Activated naive CD4-positive, alpha-beta T cell treated with anti-CD3 and anti-CD28 coated beads, Interleukin-2, amount 10 ng/mL, durations not matched to agents 7 days and 5 days (primary cell): ENCODE measurements at regions of chr17 and their contacts with region 1.

Region 1: DNA sequence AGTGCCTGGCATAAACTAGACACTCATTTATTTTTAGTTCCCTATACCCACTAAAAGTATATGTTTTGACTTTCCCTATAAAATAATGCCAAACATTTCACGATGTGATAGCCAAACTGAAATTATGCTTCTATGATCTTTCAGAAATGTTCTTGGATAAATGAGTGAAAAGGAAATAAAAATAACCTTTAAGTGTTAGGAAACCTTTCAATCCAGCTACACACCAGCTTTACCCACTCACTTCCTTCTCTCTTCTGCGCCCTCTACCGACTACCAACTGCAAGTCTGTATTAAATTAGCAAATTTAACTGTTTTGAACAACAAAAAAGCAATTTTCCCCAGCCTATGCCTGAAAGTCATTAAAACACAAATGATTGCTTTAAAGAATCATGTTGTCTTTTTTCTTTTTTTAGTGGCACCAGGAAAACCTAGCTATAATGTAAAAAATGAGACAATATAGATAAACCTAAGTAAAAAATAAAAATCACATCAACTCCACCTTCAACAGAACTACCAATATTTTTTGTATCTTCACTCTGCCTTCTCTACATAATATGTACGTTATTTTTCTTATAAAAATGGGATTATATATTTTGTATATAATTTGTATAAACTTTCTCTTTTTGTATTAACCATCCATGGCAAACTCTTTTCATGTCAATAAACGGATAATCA is 13.2 kb upstream of the TMEM100 start:
- DNase-seq: peak; percentile 56
- H3K4me3 Mint-ChIP-seq: no peak overlapping the region
- H3K27ac Mint-ChIP-seq: no peak overlapping the region
- H3K4me1 Mint-ChIP-seq: peaks cover 6% of the 10 kb centered on the region
- H3K27me3 Mint-ChIP-seq: peaks cover 5% of the 10 kb centered on the region

Region 2: DNA sequence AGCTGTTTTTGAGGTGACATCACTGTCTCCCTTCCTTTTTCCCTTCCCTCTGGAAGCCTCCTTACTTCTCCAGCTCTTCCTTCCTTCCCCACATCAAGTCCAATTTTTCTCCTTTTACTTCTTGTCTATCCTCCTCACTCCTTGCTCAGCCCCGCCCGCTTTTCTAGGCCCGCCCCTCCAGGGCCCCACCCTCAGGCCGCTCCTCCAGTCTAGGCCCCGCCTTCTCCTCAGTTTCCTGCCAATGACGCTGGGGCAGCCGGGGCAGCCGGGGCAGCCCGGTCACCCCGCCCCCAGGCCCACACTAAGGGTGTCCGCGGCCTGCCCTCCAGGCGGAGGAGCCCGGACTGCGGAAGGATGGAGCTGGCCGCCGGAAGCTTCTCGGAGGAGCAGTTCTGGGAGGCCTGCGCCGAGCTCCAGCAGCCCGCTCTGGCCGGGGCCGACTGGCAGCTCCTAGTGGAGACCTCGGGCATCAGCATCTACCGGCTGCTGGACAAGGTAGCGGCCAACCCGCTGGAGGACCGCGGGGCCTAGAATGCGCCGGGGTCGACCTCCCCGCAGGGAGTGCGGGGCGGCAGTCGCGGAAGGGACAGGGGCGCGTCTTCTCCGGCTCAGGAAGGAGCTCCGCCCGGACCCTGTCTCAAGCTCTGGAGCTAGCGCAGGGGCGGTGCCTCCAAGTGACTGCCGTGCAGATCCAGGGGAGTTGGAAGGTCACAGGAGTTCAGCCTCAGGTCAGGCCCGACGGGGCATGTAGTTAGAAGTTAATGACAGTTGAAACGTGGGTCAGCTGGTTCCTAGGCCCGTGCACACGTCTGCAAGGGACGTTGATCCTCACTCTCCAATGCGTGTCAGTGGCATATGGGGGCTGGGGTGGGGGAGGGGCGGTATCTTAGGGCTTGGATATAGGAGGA is 15.1 kb after region 1 on chr17 and contains the start of gene PCTP:
- CTCF ChIA-PET with region 1: interaction called, 10 read pairs
- DNase-seq: peak; percentile 93
- H3K4me3 Mint-ChIP-seq: peak within 1 kb of the TSS; percentile 76
- H3K27ac Mint-ChIP-seq: peak within 1 kb of the TSS; percentile 72
- H3K4me1 Mint-ChIP-seq: peaks cover 16% of the 10 kb centered on the region
- H3K27me3 Mint-ChIP-seq: peaks cover 15% of the 10 kb centered on the region

Region 3: GRCh38 chr17:55770148-55770870 is 34.4 kb after region 1 on chr17:
- CTCF ChIA-PET with region 1: interaction called, 12 read pairs
- DNase-seq: no peak
- H3K4me3 Mint-ChIP-seq: no peak overlapping the region
- H3K27ac Mint-ChIP-seq: no peak overlapping the region
- H3K4me1 Mint-ChIP-seq: no peaks in the 10 kb centered on the region
- H3K27me3 Mint-ChIP-seq: no peaks in the 10 kb centered on the region